H1 (cell line): ENCODE measurements at regions of chr15 and their contacts with region 1.

Region 1: DNA sequence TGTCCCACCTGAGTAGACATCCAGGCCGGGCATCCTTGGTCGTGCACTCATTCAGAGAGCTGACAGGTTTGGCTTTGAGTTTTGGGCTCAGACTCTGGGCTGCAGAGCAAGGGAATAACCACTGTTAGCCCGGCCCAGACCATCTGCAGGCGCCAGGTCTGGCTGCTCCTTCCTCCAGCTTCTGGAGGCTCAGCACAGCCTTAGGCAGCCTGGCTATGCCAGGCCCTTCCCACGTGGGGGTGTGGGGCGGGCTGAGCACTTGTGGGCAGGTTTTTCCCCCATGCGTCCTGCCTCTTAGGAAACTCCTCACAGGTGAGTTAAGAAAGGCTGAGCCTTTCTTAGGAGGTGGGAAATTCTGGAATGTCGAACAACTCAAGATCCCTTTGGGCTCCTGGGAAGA is 11.2 kb downstream of the PLA2G4B start:
- DNase-seq: no peak
- H3K4me3 ChIP-seq: no peak overlapping the region
- H3K27ac ChIP-seq: no peak overlapping the region
- H3K4me1 ChIP-seq: no peaks in the 10 kb centered on the region; a peak in 2 of 7 replicates
- H3K27me3 ChIP-seq: no peaks in the 10 kb centered on the region
- CTCF ChIP-seq: no peak
- EP300 ChIP-seq: no peak
- POLR2A ChIP-seq: no peak
- RAD21 ChIP-seq: no peak

Region 2: GRCh38 chr15:41811432-41812195 is 38.2 kb before region 1 on chr15:
- CTCF ChIA-PET with region 1: interaction called, 16 read pairs
- POLR2A ChIA-PET with region 1: no interaction called
- DNase-seq: peak; percentile 65 to 91
- H3K4me3 ChIP-seq: no peak overlapping the region
- H3K27ac ChIP-seq: no peak overlapping the region
- H3K4me1 ChIP-seq: peaks cover 0 to 2% (median 0%) of the 10 kb centered on the region in 4 experiments; a peak in 2 of 7 replicates
- H3K27me3 ChIP-seq: no peaks in the 10 kb centered on the region
- CTCF ChIP-seq: peak; percentile 82 to 89 (median 83)
- EP300 ChIP-seq: no peak
- POLR2A ChIP-seq: no peak
- RAD21 ChIP-seq: peak; percentile 91 to 94

Region 3: GRCh38 chr15:41832875-41833274 is 17.0 kb before region 1 on chr15:
- CTCF ChIA-PET with region 1: interaction called, 30 read pairs
- POLR2A ChIA-PET with region 1: interaction called, 45 read pairs
- DNase-seq: no peak
- H3K4me3 ChIP-seq: no peak overlapping the region
- H3K27ac ChIP-seq: no peak overlapping the region
- H3K4me1 ChIP-seq: peaks cover 0 to 4% (median 2%) of the 10 kb centered on the region in 4 experiments; a peak in 3 of 7 replicates
- H3K27me3 ChIP-seq: no peaks in the 10 kb centered on the region
- CTCF ChIP-seq: no peak
- EP300 ChIP-seq: no peak
- POLR2A ChIP-seq: no peak
- RAD21 ChIP-seq: no peak

Region 4: GRCh38 chr15:41838400-41838897 is 11.4 kb before region 1 on chr15 and contains the start of gene PLA2G4B:
- CTCF ChIA-PET with region 1: interaction called, 30 read pairs
- POLR2A ChIA-PET with region 1: interaction called, 45 read pairs
- DNase-seq: no peak
- H3K4me3 ChIP-seq: no peak within 1 kb of the TSS
- H3K27ac ChIP-seq: no peak within 1 kb of the TSS
- H3K4me1 ChIP-seq: no peaks in the 10 kb centered on the region
- H3K27me3 ChIP-seq: no peaks in the 10 kb centered on the region
- CTCF ChIP-seq: no peak
- EP300 ChIP-seq: no peak
- POLR2A ChIP-seq: no peak
- RAD21 ChIP-seq: no peak
- total RNA-seq, gene PLA2G4B: 4.2 and 8.0 TPM in 2 replicates

Region 5: GRCh38 chr15:41860049-41860828 is 10.4 kb after region 1 on chr15:
- CTCF ChIA-PET with region 1: interaction called, 21 read pairs
- POLR2A ChIA-PET with region 1: interaction called, 22 read pairs
- DNase-seq: no peak
- H3K4me3 ChIP-seq: no peak overlapping the region
- H3K27ac ChIP-seq: no peak overlapping the region
- H3K4me1 ChIP-seq: peaks cover 0 to 13% (median 3%) of the 10 kb centered on the region in 4 experiments; a peak in 4 of 7 replicates
- H3K27me3 ChIP-seq: no peaks in the 10 kb centered on the region; a peak in 3 of 7 replicates
- CTCF ChIP-seq: peak in 1 of 3 experiments; percentile 42; a peak in 1 of 4 replicates
- EP300 ChIP-seq: no peak
- POLR2A ChIP-seq: no peak
- RAD21 ChIP-seq: peak in 1 of 2 experiments; percentile 32; a peak in 1 of 4 replicates

Region 6: DNA sequence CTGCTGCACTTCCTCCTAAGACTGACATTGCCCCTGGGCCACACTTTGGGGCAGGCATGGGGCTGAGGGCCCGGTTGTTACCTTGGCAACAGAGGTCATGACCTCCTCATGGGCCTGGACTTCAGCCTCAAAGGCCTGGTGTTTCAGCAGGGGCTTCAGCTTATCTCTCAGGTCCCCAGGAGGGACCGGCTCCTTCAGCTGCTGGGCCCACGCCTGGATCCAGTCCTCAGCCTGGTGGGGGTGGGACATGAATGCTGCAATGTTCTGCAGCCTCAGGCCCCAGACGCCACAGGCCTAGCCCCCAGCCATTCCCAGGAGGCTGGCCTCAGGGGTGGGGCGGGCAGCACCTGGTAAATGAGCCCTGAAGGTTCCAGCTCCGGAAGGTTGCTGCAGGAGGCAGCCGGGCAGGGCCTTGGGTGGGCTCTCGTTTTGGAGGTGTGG is 16.4 kb after region 1 on chr15:
- CTCF ChIA-PET with region 1: interaction called, 17 read pairs
- POLR2A ChIA-PET with region 1: interaction called, 22 read pairs
- DNase-seq: no peak
- H3K4me3 ChIP-seq: no peak overlapping the region
- H3K27ac ChIP-seq: no peak overlapping the region
- H3K4me1 ChIP-seq: peaks cover 0 to 8% (median 2%) of the 10 kb centered on the region in 4 experiments; a peak in 3 of 7 replicates
- H3K27me3 ChIP-seq: no peaks in the 10 kb centered on the region; a peak in 2 of 7 replicates
- CTCF ChIP-seq: no peak
- EP300 ChIP-seq: no peak
- POLR2A ChIP-seq: no peak
- RAD21 ChIP-seq: no peak

Region 7: GRCh38 chr15:41950489-41950888 is 100.6 kb after region 1 on chr15:
- CTCF ChIA-PET with region 1: no interaction called
- POLR2A ChIA-PET with region 1: no interaction called
- DNase-seq: no peak
- H3K4me3 ChIP-seq: no peak overlapping the region
- H3K27ac ChIP-seq: no peak overlapping the region
- H3K4me1 ChIP-seq: peaks cover 0 to 3% (median 0%) of the 10 kb centered on the region in 4 experiments; a peak in 2 of 7 replicates
- H3K27me3 ChIP-seq: no peaks in the 10 kb centered on the region
- CTCF ChIP-seq: no peak
- EP300 ChIP-seq: no peak
- POLR2A ChIP-seq: no peak
- RAD21 ChIP-seq: no peak

Region 8: GRCh38 chr15:42474827-42475226 is 625.0 kb after region 1 on chr15:
- CTCF ChIA-PET with region 1: no interaction called
- POLR2A ChIA-PET with region 1: no interaction called
- DNase-seq: no peak
- H3K4me3 ChIP-seq: no peak overlapping the region
- H3K27ac ChIP-seq: no peak overlapping the region
- H3K4me1 ChIP-seq: no peaks in the 10 kb centered on the region
- H3K27me3 ChIP-seq: no peaks in the 10 kb centered on the region
- CTCF ChIP-seq: no peak
- EP300 ChIP-seq: no peak
- POLR2A ChIP-seq: no peak
- RAD21 ChIP-seq: no peak